OCI-LY7 (cell line): ENCODE measurements at regions of chr3 and their contacts with region 1.

Region 1: GRCh38 chr3:16912400-16913263 is 27.9 kb downstream of the PLCL2 start:
- DNase-seq: peak; percentile 86
- H3K4me3 ChIP-seq: peak overlapping the region; percentile 52
- H3K27ac ChIP-seq: peak overlapping the region; percentile 98
- H3K4me1 ChIP-seq: peaks cover 90% of the 10 kb centered on the region
- CTCF ChIP-seq: no peak

Region 2: DNA sequence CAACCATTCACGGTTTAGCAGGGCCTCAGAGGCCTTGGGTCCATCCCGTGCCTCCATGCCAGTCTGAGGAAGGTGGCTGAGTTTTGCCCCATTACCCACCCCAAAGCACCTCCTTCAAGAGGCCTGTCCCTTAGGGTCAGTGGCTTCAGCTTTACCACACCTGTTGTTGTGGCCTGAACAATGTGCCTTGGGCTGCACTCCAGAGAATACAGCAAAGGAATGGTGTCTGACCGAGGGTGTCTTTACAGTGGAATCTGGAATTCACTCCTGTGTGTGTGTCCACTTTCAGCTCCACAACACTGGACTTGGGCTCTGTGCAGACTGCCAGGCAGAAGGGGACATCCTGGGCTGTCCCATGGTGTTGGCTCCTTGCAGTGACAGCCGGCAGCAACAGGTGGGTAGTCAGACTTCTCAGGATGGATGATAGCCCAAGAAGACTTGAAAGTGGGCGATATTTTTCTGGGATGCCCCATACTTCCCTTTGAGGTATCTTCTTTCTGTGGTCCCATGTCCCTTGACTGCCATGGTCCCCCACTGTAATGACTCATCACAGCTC is 692.9 kb before region 1 on chr3:
- CTCF ChIA-PET with region 1: no interaction called
- POLR2A ChIA-PET with region 1: no interaction called
- intact Hi-C with region 1: no loop called
- DNase-seq: no peak
- H3K4me3 ChIP-seq: no peak overlapping the region
- H3K27ac ChIP-seq: no peak overlapping the region
- H3K4me1 ChIP-seq: no peaks in the 10 kb centered on the region
- CTCF ChIP-seq: no peak

Region 3: GRCh38 chr3:16370872-16371740 is 541.5 kb before region 1 on chr3:
- CTCF ChIA-PET with region 1: no interaction called
- POLR2A ChIA-PET with region 1: no interaction called
- intact Hi-C with region 1: loop called (anchors 5 kb)
- DNase-seq: peak; percentile 64
- H3K4me3 ChIP-seq: peak overlapping the region; percentile 33
- H3K27ac ChIP-seq: peak overlapping the region; percentile 99
- H3K4me1 ChIP-seq: peaks cover 82% of the 10 kb centered on the region
- CTCF ChIP-seq: no peak

Region 4: GRCh38 chr3:16897254-16897926 is 15.2 kb before region 1 on chr3:
- CTCF ChIA-PET with region 1: interaction called, 3 read pairs
- POLR2A ChIA-PET with region 1: interaction called, 22 read pairs
- intact Hi-C with region 1: loop called (anchors 1 kb)
- DNase-seq: peak; percentile 91
- H3K4me3 ChIP-seq: peak overlapping the region; percentile 65
- H3K27ac ChIP-seq: peak overlapping the region; percentile 77
- H3K4me1 ChIP-seq: peaks cover 94% of the 10 kb centered on the region
- CTCF ChIP-seq: no peak

Region 5: GRCh38 chr3:16928386-16929132 is 15.9 kb after region 1 on chr3:
- CTCF ChIA-PET with region 1: no interaction called
- POLR2A ChIA-PET with region 1: interaction called, 13 read pairs
- intact Hi-C with region 1: no loop called
- DNase-seq: no peak
- H3K4me3 ChIP-seq: no peak overlapping the region
- H3K27ac ChIP-seq: no peak overlapping the region
- H3K4me1 ChIP-seq: peaks cover 19% of the 10 kb centered on the region
- CTCF ChIP-seq: no peak